ENCODE measurements at regions of chr1 and their contacts with region 1.

Region 1: DNA sequence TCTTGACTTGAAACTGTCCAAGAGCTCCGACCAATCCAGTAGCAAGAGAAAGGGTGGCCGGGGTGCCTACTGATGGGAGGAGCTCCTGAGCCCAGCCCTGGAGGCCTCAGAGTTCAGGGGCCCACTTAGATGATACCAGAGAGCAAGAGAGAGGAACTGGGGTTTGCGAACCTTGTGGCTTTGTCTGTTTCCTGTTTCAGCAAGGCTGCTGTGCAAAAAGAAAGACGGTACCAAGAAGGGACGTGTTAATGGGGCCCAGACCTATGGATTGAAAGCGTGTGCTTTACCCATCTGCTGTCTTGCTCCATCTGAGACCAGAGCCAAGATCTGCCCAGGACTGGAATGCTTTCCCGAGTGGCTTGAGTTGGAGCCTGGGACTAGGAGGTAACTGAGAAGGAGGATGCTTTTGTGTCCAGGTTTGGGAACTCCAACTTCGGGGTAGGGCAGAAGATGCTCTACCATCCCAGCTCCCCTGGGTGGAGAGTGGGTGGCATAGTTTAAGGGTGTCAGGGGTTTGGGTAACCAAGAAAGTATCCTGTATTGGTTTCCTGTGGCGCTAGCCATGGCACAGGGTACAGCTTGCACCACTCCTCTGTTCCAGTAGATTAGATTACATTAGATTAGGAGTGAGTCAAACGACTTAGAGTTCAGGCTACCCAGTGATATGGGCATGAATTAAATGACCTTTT is at the start of gene TRAF3IP3:
- DNase-seq: peak; percentile 85
- ATAC-seq: peak; percentile 96
- H3K4me3 ChIP-seq: peak within 1 kb of the TSS; percentile 59 to 80 (median 69)
- H3K4me3 Mint-ChIP-seq: peak within 1 kb of the TSS; percentile 92
- H3K27ac ChIP-seq: peak within 1 kb of the TSS; percentile 67 to 86
- H3K27ac Mint-ChIP-seq: peak within 1 kb of the TSS; percentile 95
- H3K4me1 ChIP-seq: peaks cover 62 to 82% of the 10 kb centered on the region in 2 donors
- H3K4me1 Mint-ChIP-seq: peaks cover 70% of the 10 kb centered on the region
- H3K27me3 ChIP-seq: no peaks in the 10 kb centered on the region
- H3K27me3 Mint-ChIP-seq: no peaks in the 10 kb centered on the region
- CTCF ChIP-seq: no peak
- total RNA-seq, gene TRAF3IP3: 257 and 262 TPM in 2 replicates

Region 2: DNA sequence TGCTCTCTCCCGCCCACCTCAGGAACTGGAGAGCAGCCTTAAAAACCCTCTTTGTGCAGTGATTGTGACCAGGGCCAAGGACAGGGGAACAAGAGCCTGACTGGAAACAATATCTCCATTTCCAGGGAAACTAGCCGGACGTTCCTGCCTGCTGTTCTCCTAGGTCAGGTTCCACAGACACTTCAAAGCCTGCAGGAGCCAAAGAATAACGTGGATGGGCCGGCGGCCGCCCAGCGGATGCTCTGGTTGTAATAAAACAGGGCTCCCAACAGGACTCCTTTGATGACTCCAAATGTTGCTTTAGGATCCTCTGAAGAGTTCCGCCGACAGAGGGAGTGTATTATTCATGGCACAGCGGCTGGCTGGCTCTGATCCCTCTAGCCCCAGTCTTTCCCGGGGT is 1674.1 kb before region 1 on chr1:
- CTCF ChIA-PET with region 1: no interaction called
- POLR2A ChIA-PET with region 1: interaction called, 15 read pairs
- intact Hi-C with region 1: no loop called
- DNase-seq: no peak
- ATAC-seq: no peak
- H3K4me3 ChIP-seq: no peak overlapping the region
- H3K4me3 Mint-ChIP-seq: no peak overlapping the region
- H3K27ac ChIP-seq: no peak overlapping the region
- H3K27ac Mint-ChIP-seq: no peak overlapping the region
- H3K4me1 ChIP-seq: peaks cover 8 to 13% of the 10 kb centered on the region in 2 donors
- H3K4me1 Mint-ChIP-seq: peaks cover 13% of the 10 kb centered on the region
- H3K27me3 ChIP-seq: no peaks in the 10 kb centered on the region
- H3K27me3 Mint-ChIP-seq: peaks cover 8% of the 10 kb centered on the region
- CTCF ChIP-seq: no peak

Region 3: GRCh38 chr1:208510194-208510952 is 1245.7 kb before region 1 on chr1:
- CTCF ChIA-PET with region 1: no interaction called
- POLR2A ChIA-PET with region 1: no interaction called
- intact Hi-C with region 1: no loop called
- DNase-seq: no peak
- ATAC-seq: no peak
- H3K4me3 ChIP-seq: no peak overlapping the region
- H3K4me3 Mint-ChIP-seq: no peak overlapping the region
- H3K27ac ChIP-seq: no peak overlapping the region
- H3K27ac Mint-ChIP-seq: no peak overlapping the region
- H3K4me1 ChIP-seq: no peaks in the 10 kb centered on the region
- H3K4me1 Mint-ChIP-seq: no peaks in the 10 kb centered on the region
- H3K27me3 ChIP-seq: no peaks in the 10 kb centered on the region
- H3K27me3 Mint-ChIP-seq: no peaks in the 10 kb centered on the region
- CTCF ChIP-seq: no peak

Region 4: DNA sequence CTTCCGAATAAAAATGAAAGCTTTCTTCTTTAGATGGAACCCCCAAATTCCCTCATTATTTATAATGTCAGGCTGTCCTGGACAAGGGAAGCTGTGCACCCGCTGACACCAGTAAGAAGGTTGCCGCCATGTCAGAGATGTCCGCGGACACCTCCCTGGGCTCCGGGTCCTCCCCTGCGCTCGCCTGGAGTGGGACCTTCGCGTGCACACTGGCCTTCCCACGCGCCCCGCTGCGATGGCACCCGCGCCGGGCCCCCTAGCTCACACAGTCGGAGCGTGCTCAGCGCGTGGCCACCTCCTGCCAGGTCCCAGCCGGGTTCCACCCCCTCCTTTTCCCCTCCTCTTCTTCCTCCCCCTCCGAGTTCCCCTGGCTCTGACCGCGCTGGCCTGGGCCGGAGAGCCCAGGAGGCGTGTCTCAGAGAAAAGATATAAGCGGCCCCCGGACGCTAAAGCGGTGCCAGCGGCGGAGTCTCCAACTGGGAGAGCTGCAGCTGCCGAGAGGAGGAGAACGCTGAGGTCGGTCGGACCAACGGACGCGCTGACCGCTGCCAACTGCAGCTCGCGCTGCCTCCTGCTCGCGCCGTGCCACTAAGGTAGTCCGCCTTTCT is 81.0 kb before region 1 on chr1 and contains the start of gene G0S2:
- CTCF ChIA-PET with region 1: interaction called, 3 read pairs
- POLR2A ChIA-PET with region 1: interaction called, 3 read pairs
- intact Hi-C with region 1: loop called (anchors 10 kb)
- DNase-seq: peak; percentile 30
- ATAC-seq: peak; percentile 15
- H3K4me3 ChIP-seq: peak within 1 kb of the TSS; percentile 10 to 72 (median 38)
- H3K4me3 Mint-ChIP-seq: peak within 1 kb of the TSS; percentile 75
- H3K27ac ChIP-seq: no peak within 1 kb of the TSS
- H3K27ac Mint-ChIP-seq: no peak within 1 kb of the TSS
- H3K4me1 ChIP-seq: peaks cover 32 to 35% of the 10 kb centered on the region in 2 donors
- H3K4me1 Mint-ChIP-seq: peaks cover 33% of the 10 kb centered on the region
- H3K27me3 ChIP-seq: peaks cover 0 to 44% (median 23%) of the 10 kb centered on the region in 4 experiments
- H3K27me3 Mint-ChIP-seq: peaks cover 45% of the 10 kb centered on the region
- CTCF ChIP-seq: no peak
- total RNA-seq, gene G0S2: not detected in 2 replicates

Region 5: GRCh38 chr1:209769171-209769904 is 13.3 kb after region 1 on chr1:
- CTCF ChIA-PET with region 1: interaction called, 14 read pairs
- POLR2A ChIA-PET with region 1: interaction called, 40 read pairs
- intact Hi-C with region 1: loop called (anchors 1 kb)
- DNase-seq: peak; percentile 47
- ATAC-seq: peak; percentile 57
- H3K4me3 ChIP-seq: peak overlapping the region; percentile 58 to 83 (median 68)
- H3K4me3 Mint-ChIP-seq: no peak overlapping the region
- H3K27ac ChIP-seq: peak overlapping the region; percentile 57 to 87
- H3K27ac Mint-ChIP-seq: no peak overlapping the region
- H3K4me1 ChIP-seq: peaks cover 65 to 80% of the 10 kb centered on the region in 2 donors
- H3K4me1 Mint-ChIP-seq: peaks cover 29% of the 10 kb centered on the region
- H3K27me3 ChIP-seq: no peaks in the 10 kb centered on the region
- H3K27me3 Mint-ChIP-seq: no peaks in the 10 kb centered on the region
- CTCF ChIP-seq: no peak

Region 6: DNA sequence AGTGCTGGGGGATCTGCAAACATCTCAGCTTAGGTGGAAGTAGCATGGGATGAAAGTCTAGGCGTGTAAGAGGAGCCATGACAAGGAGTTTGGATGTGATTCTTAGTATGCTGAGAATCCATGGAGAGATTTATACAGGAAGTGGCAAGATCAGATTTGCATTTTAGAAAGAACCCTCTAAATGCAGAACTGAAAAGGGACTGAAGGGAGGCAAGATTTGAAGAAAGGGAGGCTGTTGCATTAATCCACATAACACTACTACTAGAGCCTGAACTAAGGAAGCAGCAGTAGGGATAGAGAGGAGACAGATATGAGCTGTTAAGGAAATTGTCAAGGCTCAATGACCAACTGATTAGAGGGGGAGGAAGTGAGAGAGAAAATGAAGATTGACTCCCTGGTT is 18.5 kb after region 1 on chr1:
- CTCF ChIA-PET with region 1: interaction called, 14 read pairs
- POLR2A ChIA-PET with region 1: interaction called, 40 read pairs
- intact Hi-C with region 1: loop called (anchors 2 kb)
- DNase-seq: peak; percentile 51
- ATAC-seq: peak; percentile 60
- H3K4me3 ChIP-seq: peak overlapping the region in 3 of 5 experiments; percentile 13 to 29 (median 16)
- H3K4me3 Mint-ChIP-seq: peak overlapping the region; percentile 81
- H3K27ac ChIP-seq: peak overlapping the region; percentile 42 to 77
- H3K27ac Mint-ChIP-seq: no peak overlapping the region
- H3K4me1 ChIP-seq: peaks cover 59 to 67% of the 10 kb centered on the region in 2 donors
- H3K4me1 Mint-ChIP-seq: peaks cover 3% of the 10 kb centered on the region
- H3K27me3 ChIP-seq: no peaks in the 10 kb centered on the region
- H3K27me3 Mint-ChIP-seq: no peaks in the 10 kb centered on the region
- CTCF ChIP-seq: no peak

Region 7: GRCh38 chr1:209784265-209785169 is 28.4 kb after region 1 on chr1 and contains the start of gene C1orf74:
- CTCF ChIA-PET with region 1: interaction called, 5 read pairs
- POLR2A ChIA-PET with region 1: interaction called, 6 read pairs
- intact Hi-C with region 1: loop called (anchors 1 kb)
- DNase-seq: peak; percentile 99
- ATAC-seq: peak; percentile 98
- H3K4me3 ChIP-seq: peak within 1 kb of the TSS; percentile 54 to 90 (median 79)
- H3K4me3 Mint-ChIP-seq: peak within 1 kb of the TSS; percentile 92
- H3K27ac ChIP-seq: peak within 1 kb of the TSS; percentile 86 to 90
- H3K27ac Mint-ChIP-seq: peak within 1 kb of the TSS; percentile 95
- H3K4me1 ChIP-seq: peaks cover 14 to 20% of the 10 kb centered on the region in 2 donors
- H3K4me1 Mint-ChIP-seq: peaks cover 25% of the 10 kb centered on the region
- H3K27me3 ChIP-seq: peaks cover 0 to 12% (median 1%) of the 10 kb centered on the region in 4 experiments
- H3K27me3 Mint-ChIP-seq: peaks cover 4% of the 10 kb centered on the region
- CTCF ChIP-seq: no peak
- total RNA-seq, gene C1orf74: 3.4 and 4.1 TPM in 2 replicates

Measured in B cell (primary cell).